Activated B cell treated with CpG ODN at 0.5 μM for 24 hours (primary cell): ENCODE measurements at regions of chr1 and their contacts with region 1.

Region 1: GRCh38 chr1:180631766-180632325 is at the start of gene XPR1:
- DNase-seq: peak; percentile 84
- ATAC-seq: peak; percentile 95
- H3K4me3 Mint-ChIP-seq: peak within 1 kb of the TSS; percentile 35
- H3K27ac Mint-ChIP-seq: peak within 1 kb of the TSS; percentile 88
- H3K4me1 Mint-ChIP-seq: peaks cover 17% of the 10 kb centered on the region
- H3K27me3 Mint-ChIP-seq: peaks cover 5% of the 10 kb centered on the region
- CTCF ChIP-seq: no peak
- total RNA-seq, gene XPR1: 17.1 and 20.4 TPM in 2 replicates

Region 2: GRCh38 chr1:179817789-179818188 is 814.1 kb before region 1 on chr1:
- CTCF ChIA-PET with region 1: no interaction called
- POLR2A ChIA-PET with region 1: no interaction called
- intact Hi-C with region 1: no loop called
- DNase-seq: no peak
- ATAC-seq: no peak
- H3K4me3 Mint-ChIP-seq: no peak overlapping the region
- H3K27ac Mint-ChIP-seq: no peak overlapping the region
- H3K4me1 Mint-ChIP-seq: peaks cover 19% of the 10 kb centered on the region
- H3K27me3 Mint-ChIP-seq: peaks cover 4% of the 10 kb centered on the region
- CTCF ChIP-seq: no peak

Region 3: DNA sequence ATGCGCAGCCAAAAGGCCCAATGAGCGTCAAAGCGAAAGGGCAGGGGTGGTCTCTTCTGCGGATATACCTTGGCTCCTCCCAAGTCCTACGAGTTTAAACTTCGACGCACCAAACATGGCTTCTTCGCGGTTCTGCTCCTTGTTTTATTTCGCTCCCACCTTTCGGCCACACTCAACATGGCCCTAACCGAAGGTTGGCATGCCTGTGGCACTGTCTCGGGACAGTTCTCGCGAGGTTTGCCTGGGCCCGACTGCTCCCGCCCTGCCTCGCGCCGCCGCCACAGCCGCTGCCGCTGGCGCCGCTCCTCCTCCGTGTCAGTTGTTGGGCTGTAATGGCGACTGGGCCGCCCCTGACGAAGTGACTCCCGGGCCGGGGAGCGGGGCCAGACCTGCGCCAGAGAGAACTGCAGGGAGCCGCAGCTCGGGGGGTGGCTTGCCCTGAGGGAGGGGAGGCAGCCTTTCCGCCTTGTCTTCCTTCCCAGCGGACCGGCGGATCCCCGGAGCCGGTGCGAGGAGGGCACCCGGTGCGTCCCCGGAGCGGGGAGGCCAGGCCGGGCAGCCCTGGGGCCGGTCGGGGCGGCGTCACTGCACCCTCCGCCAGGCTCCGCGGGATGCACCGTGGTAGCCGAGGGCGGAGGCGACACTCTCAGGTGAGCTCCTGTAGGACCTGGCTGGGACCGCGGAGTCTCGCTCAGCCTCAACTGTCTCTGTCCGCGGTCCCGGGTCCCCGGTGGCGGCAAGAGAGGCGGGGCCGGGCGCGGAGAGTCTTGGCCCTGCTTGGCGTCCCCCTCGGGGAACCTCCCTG is 677.2 kb before region 1 on chr1 and contains the start of gene CEP350:
- CTCF ChIA-PET with region 1: no interaction called
- POLR2A ChIA-PET with region 1: no interaction called
- intact Hi-C with region 1: loop called (anchors 5 kb)
- DNase-seq: peak; percentile 91
- ATAC-seq: peak; percentile 90
- H3K4me3 Mint-ChIP-seq: peak within 1 kb of the TSS; percentile 81
- H3K27ac Mint-ChIP-seq: peak within 1 kb of the TSS; percentile 90
- H3K4me1 Mint-ChIP-seq: peaks cover 57% of the 10 kb centered on the region
- H3K27me3 Mint-ChIP-seq: no peaks in the 10 kb centered on the region
- CTCF ChIP-seq: no peak
- total RNA-seq, gene CEP350: 60.8 and 63.9 TPM in 2 replicates

Region 4: DNA sequence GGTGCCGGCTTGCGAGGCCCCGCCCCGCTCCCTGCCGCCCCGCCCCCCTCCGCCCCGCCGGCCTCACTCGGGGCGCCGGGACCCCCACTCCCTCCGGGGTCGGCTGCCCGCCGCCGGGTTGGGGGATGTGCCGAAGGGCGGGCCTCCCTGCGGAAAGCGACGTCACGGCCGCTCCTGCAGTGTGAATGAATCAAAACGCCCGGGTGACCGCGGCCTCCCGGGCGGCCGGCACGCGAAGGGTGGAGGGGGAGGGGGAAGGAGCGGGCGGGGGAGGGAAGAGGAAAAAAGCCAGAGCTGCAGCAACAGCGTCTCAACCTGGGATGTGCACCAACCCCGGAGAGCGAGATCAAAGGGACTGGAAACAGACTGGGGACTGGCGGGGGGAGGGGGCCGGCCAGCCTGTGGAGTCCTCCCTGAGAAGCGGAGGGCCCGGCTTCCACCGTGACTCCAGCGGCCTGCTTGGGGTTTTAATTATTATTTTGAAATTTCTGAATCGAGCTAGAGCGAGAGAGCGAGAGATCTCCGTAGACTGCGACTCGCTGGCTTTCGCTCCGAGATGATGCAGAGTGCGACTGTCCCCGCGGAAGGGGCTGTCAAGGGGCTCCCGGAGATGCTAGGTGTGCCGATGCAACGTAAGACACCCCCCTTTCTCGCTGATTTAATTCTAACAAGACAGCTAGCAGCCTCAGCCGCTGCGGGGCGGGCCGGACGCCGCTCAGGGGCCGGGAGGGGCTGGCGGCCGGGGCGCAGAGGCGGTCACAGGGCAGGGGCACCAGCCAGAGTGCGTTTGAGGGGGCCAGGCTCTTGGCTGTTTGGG is 401.7 kb before region 1 on chr1 and contains the start of gene LHX4:
- CTCF ChIA-PET with region 1: no interaction called
- POLR2A ChIA-PET with region 1: no interaction called
- intact Hi-C with region 1: loop called (anchors 5 kb)
- DNase-seq: peak; percentile 26
- ATAC-seq: no peak
- H3K4me3 Mint-ChIP-seq: peak within 1 kb of the TSS; percentile 78
- H3K27ac Mint-ChIP-seq: no peak within 1 kb of the TSS
- H3K4me1 Mint-ChIP-seq: peaks cover 37% of the 10 kb centered on the region
- H3K27me3 Mint-ChIP-seq: peaks cover 50% of the 10 kb centered on the region
- CTCF ChIP-seq: no peak
- total RNA-seq, gene LHX4: not detected in 2 replicates

Region 5: DNA sequence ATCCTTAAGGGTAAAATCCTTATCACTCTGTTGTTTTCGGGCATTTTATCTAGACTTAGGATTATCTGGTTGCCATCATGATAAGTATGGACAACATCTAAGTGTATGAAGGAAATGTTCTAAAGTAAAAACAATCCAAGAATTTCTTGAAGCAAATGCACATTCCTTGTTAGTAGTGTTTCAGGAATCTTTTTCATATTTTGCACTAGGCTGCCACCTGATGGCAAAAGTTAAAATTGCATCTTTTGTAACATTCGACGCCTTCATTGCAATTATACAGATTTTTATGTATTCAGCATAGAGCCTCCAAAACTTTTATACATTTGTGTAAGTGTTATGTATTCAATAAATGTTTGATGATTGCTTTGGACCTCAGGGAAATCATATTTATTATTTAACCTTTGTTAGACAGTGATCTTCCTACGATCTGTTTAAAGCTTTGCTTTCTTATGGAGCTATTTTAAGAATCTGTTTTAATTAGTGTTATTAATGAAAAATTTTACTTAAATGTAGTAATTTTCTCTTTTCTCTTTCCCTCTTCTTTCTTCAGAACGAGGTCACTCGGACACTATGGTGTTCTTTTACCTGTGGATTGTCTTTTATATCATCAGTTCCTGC is 231.4 kb after region 1 on chr1:
- CTCF ChIA-PET with region 1: interaction called, 12 read pairs
- POLR2A ChIA-PET with region 1: no interaction called
- intact Hi-C with region 1: loop called (anchors 5 kb)
- DNase-seq: no peak
- ATAC-seq: no peak
- H3K4me3 Mint-ChIP-seq: no peak overlapping the region
- H3K27ac Mint-ChIP-seq: no peak overlapping the region
- H3K4me1 Mint-ChIP-seq: no peaks in the 10 kb centered on the region
- H3K27me3 Mint-ChIP-seq: no peaks in the 10 kb centered on the region
- CTCF ChIP-seq: peak; percentile 92

Region 6: GRCh38 chr1:181021811-181022434 is 390.1 kb after region 1 on chr1:
- CTCF ChIA-PET with region 1: no interaction called
- POLR2A ChIA-PET with region 1: interaction called, 6 read pairs
- intact Hi-C with region 1: loop called (anchors 2 kb)
- DNase-seq: no peak
- ATAC-seq: peak; percentile 37
- H3K4me3 Mint-ChIP-seq: peak overlapping the region; percentile 96
- H3K27ac Mint-ChIP-seq: peak overlapping the region; percentile 94
- H3K4me1 Mint-ChIP-seq: peaks cover 40% of the 10 kb centered on the region
- H3K27me3 Mint-ChIP-seq: no peaks in the 10 kb centered on the region
- CTCF ChIP-seq: no peak

Region 7: DNA sequence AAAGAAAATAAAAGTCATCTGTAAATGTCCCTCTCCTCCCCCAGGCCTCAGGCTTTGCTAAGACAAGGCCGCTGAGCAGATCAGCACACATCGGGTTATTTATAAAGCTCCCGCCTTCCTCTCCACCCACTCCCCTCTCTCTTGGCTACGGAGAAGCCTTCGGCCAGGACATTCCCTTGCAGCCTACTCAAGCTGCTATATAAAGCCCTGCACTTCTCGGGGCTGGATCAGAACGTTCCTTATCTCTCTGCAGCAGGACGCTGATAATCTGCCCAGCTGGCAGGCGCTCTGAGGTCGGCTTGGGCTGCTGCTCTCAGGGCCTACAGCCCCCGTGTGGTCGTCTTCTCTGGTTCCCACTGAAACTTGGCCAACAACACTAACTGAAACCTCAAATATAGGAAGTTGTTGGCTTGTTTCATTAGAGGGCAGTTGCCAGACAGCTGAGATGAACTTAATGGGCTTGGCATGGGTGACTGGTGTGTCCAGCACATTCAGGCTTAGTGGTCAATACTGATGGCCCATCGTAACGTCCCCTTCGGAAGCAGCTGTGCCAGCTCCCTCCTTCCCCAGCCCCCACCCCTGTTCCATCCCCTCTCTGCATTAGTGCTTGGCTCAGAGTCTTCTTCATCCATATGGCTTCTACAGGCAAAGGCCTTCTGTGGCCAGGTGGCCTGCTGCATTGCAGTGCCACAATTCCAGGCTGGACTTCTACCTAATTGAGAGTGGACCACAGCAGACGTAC is 521.2 kb after region 1 on chr1:
- CTCF ChIA-PET with region 1: no interaction called
- POLR2A ChIA-PET with region 1: no interaction called
- intact Hi-C with region 1: loop called (anchors 5 kb)
- DNase-seq: peak; percentile 48
- ATAC-seq: peak; percentile 86
- H3K4me3 Mint-ChIP-seq: peak overlapping the region; percentile 71
- H3K27ac Mint-ChIP-seq: peak overlapping the region; percentile 64
- H3K4me1 Mint-ChIP-seq: peaks cover 48% of the 10 kb centered on the region
- H3K27me3 Mint-ChIP-seq: no peaks in the 10 kb centered on the region
- CTCF ChIP-seq: no peak

Region 8: DNA sequence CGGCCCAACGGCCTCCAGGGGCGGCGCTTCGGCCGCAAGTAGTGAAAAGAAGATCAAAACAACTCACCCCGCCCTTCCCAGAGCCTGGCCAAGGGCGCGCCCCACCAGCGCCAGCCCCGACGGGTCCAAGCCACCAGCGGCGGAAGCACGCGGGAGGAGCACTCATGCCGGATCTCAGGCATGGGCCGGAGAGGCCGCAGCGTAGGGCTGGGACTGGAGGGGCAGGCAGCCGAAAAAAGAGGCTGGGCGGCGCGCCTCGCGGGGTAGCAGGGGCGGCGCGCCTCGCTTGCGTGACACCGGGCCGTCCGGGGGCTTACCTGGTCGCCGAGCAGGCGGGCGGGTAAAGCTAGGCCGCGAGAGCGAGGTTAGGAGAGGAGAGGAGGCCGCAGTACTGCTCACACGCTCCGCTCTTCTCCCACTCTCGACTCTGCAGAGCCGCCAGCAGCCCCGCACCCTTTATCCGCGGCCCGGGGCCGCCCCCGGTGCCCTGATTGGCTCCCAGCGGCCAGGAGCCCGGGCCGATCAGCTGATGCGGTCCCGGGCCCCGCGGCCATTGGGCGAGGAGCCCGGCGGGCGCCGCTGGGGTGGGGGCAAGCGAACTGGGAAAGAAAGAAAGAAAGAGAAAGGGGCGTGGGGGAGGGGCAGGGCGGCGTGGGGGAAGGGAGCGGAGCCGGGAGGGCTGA is 1759.7 kb after region 1 on chr1 and contains the start of gene GLUL:
- CTCF ChIA-PET with region 1: no interaction called
- POLR2A ChIA-PET with region 1: no interaction called
- intact Hi-C with region 1: loop called (anchors 5 kb)
- DNase-seq: peak; percentile 63
- ATAC-seq: peak; percentile 83
- H3K4me3 Mint-ChIP-seq: peak within 1 kb of the TSS; percentile 96
- H3K27ac Mint-ChIP-seq: peak within 1 kb of the TSS; percentile 87
- H3K4me1 Mint-ChIP-seq: peaks cover 33% of the 10 kb centered on the region
- H3K27me3 Mint-ChIP-seq: peaks cover 4% of the 10 kb centered on the region
- CTCF ChIP-seq: no peak
- total RNA-seq, gene GLUL: 36.8 and 37.8 TPM in 2 replicates